Ascending aorta (tissue), 2 donors: ENCODE measurements at regions of chr2 and their contacts with region 1.

Region 1: DNA sequence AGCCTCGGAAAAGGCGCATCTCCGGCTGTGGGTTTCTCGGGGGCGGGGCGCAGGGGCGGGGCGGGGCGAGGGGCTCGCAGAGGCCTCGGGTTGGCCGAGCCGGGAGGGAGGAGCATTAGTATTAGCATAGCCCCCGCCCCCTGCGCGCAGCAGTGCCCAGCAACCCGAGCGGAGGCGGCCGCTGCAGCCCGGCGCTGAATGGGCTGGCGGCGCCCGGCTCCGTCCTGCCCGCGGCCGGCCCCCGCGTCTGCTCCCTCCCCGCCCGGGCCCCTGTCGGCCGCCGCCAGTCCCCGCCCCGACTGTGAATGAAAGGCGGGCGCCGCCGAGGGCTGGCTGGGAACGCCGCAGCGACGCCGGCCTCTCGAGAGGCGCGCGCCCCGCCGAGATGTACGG is at the start of gene EFR3B:
- DNase-seq: peak; percentile 81 to 97
- H3K4me3 ChIP-seq: peak within 1 kb of the TSS; percentile 71 to 85
- H3K27ac ChIP-seq: peak within 1 kb of the TSS; percentile 75 to 77
- H3K4me1 ChIP-seq: peaks cover 2 to 16% of the 10 kb centered on the region in 2 donors
- H3K27me3 ChIP-seq: no peaks in the 10 kb centered on the region
- CTCF ChIP-seq: no peak
- total RNA-seq, gene EFR3B: 0.32 TPM

Region 2: DNA sequence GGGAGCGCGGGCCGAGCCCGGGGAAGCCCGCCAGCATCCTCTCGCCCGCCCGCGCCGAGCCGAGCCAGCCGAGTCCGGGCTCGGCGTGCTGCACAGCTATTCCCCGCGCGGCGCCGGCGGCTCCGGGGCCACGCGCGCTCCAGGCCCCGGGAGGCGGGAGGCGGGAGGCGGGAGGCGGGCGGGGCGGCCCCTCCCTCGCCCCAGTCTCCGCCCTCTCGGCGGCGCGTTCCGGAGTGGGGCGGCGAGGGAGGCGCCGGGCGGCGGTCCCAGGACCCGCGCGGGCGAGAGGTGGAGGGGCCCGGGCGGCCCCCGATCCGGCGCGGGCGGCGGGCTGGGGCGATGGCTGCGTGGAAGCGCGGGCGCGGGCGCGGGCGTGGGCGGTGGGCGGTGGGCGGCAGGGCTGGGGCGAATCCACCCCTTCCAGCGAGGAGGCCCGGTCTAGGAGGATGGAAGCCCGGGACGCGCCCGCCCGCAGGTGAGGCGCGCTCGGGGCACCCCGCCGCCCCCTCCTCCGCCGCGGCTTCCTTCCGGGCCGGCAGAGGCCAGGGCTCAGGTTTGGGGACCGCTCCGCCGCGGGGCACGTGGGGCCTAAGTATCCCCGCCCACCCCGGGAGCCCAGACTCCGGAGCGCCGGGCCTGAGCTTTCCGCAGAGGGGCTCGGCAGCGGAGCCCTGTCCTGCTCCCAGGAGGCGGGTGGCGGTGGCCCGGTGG is 121.7 kb before region 1 on chr2 and contains the start of gene ADCY3:
- intact Hi-C with region 1: loop called (anchors 5 kb)
- DNase-seq: peak in 1 of 2 donors; percentile 75
- H3K4me3 ChIP-seq: peak within 1 kb of the TSS; percentile 72 to 93
- H3K27ac ChIP-seq: peak within 1 kb of the TSS; percentile 60 to 62
- H3K4me1 ChIP-seq: peaks cover 0 to 5% of the 10 kb centered on the region in 2 donors
- H3K27me3 ChIP-seq: no peaks in the 10 kb centered on the region
- CTCF ChIP-seq: no peak
- total RNA-seq, gene ADCY3: 140 TPM

Region 3: DNA sequence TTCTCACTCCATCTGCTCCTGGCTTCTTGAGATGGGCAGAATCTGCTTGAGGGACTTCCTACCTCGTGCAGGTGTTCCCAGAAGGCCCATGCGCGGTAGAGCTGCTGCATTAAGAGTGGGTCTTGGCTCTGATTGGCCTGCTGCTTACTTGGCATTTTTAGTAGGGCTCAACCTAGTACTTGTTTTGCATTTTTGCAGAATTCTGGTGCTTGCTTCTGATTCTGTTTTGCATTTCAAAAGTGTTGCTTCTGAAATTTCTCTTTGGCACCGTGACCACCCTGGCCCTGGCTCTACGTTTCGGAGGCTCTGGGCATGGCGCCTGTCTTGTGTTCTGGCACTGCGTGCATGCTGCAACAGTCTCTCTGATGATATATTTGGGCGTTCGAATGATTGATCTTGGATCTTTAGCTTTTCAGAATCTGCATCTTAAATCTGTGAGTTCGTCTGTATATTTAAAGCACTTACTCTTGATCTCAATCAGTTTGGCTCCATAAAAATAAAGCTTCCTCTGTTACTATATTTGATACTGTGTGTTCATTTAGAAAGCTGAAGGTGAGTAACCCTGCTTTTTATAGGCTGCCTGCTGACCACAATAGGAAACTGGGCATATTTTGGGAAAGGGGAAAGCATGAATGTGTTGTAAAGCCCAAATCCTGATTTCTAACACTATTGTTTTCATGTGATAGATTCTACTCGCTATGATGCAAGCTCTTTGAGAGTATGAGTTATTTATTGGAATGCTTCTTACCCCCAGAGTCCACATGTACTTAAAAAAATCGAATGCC is 22.1 kb after region 1 on chr2:
- intact Hi-C with region 1: loop called (anchors 2 kb)
- DNase-seq: no peak
- H3K4me3 ChIP-seq: peak overlapping the region in 1 of 2 donors; percentile 40
- H3K27ac ChIP-seq: peak overlapping the region; percentile 43 to 54
- H3K4me1 ChIP-seq: peaks cover 0 to 11% of the 10 kb centered on the region in 2 donors
- H3K27me3 ChIP-seq: no peaks in the 10 kb centered on the region
- CTCF ChIP-seq: no peak

Region 4: GRCh38 chr2:25127646-25128045 is 85.7 kb after region 1 on chr2:
- intact Hi-C with region 1: loop called (anchors 2 kb)
- DNase-seq: no peak
- H3K4me3 ChIP-seq: no peak overlapping the region
- H3K27ac ChIP-seq: no peak overlapping the region
- H3K4me1 ChIP-seq: no peaks in the 10 kb centered on the region
- H3K27me3 ChIP-seq: no peaks in the 10 kb centered on the region
- CTCF ChIP-seq: no peak

Region 5: GRCh38 chr2:26345545-26346453 is 1303.9 kb after region 1 on chr2 and contains the start of gene SELENOI:
- intact Hi-C with region 1: loop called (anchors 10 kb)
- DNase-seq: peak; percentile 96 to 99
- H3K4me3 ChIP-seq: peak within 1 kb of the TSS; percentile 74 to 94
- H3K27ac ChIP-seq: peak within 1 kb of the TSS; percentile 90 to 94
- H3K4me1 ChIP-seq: peaks cover 6 to 20% of the 10 kb centered on the region in 2 donors
- H3K27me3 ChIP-seq: no peaks in the 10 kb centered on the region
- CTCF ChIP-seq: no peak
- total RNA-seq, gene SELENOI: 2.2 TPM

Region 6: DNA sequence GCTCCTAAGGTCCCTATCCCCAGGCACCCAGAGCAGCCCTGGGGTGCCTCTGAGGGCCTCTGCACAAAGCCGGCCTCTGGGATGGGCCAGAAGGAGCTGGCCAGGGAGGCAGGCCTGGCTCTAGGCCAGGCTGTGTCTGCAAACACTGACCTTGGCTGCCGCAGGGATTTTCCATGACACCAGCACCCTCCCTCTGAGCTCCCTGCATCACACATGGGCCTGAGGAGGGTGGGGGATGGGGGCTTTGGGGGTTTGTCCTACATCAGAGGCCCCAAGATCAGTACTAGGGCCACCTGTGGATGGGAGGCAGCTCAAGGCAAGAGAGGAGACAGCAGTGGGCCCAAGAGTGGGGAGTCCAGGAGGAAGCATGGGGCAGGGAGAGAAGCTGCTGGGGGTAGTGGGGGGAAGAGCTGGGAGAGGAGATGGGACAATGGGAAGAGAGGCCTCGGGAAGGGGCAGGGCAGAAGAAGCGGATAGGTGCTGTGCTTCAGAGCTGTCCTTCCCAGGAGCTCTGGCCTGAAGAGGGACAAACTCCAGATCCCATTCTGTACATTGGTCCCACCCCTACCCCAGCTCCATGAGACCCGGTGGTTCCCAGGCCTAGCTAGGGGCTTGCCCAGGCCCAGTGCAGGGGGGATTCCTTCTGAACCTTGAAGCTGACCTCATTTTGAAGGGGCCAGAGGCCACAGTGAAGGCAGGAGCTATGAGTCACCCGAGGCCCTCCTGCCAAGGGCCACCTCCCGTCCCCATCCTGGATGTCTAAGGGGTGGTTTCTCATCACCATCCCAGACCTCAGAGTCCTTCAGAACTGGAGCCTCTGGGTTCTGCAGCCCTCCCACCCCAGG is 1678.6 kb after region 1 on chr2:
- intact Hi-C with region 1: loop called (anchors 5 kb)
- DNase-seq: peak; percentile 47 to 92
- H3K4me3 ChIP-seq: no peak overlapping the region
- H3K27ac ChIP-seq: peak overlapping the region; percentile 64 to 70
- H3K4me1 ChIP-seq: peaks cover 27 to 41% of the 10 kb centered on the region in 2 donors
- H3K27me3 ChIP-seq: no peaks in the 10 kb centered on the region
- CTCF ChIP-seq: no peak